Endothelial cell of umbilical vein (primary cell): ENCODE measurements at regions of chr7 and their contacts with region 1.

Region 1: DNA sequence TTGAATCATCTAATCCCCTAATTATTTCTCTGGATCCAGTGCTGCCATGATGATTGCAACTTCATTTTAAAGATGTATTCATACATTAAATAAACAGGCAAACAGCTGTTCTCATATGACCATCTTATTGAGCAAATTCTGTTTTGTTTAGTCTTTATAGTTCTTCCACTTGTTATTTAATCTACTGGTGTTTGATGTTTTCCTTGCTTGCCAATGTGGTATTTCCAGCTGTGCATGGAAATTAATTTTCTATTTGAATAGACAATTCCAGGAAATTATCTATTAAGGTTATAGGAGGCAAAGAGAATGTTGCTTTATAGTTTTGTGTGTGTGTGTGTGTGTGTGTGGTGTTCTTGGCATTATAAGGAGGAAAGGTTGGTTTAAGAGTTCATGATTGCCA is 167.0 kb upstream of the PRPS1L1 start:
- DNase-seq: peak; percentile 58
- H3K4me3 ChIP-seq: no peak overlapping the region
- H3K27ac ChIP-seq: no peak overlapping the region
- H3K4me1 ChIP-seq: peaks cover 6% of the 10 kb centered on the region
- H3K27me3 ChIP-seq: no peaks in the 10 kb centered on the region
- CTCF ChIP-seq: no peak
- POLR2A ChIP-seq: no peak

Region 2: DNA sequence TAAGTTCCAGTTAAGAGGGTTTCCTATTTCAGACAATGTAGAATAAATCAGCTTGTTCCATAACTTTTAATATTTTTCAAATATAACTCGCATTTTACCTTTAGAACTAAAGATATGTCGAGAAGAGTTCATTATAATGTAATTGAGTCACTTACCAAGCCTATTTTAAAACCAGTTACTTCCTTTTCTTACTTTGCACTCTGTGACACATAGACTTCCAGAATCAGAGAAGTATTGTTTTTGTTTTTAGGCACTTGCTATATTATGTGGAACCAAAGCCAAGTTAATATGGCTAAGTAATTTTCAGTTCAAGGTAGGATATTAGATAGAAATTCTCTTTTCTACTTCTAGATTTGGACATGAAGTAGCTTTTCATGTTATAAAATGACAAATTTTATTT is 15.8 kb after region 1 on chr7:
- CTCF ChIA-PET with region 1: interaction called, 3 read pairs
- POLR2A ChIA-PET with region 1: interaction called, 3 read pairs
- dilution Hi-C with region 1: no loop called
- intact Hi-C with region 1: loop called (anchors 2 kb)
- DNase-seq: no peak
- H3K4me3 ChIP-seq: no peak overlapping the region
- H3K27ac ChIP-seq: no peak overlapping the region
- H3K4me1 ChIP-seq: peaks cover 4% of the 10 kb centered on the region
- H3K27me3 ChIP-seq: no peaks in the 10 kb centered on the region
- CTCF ChIP-seq: no peak
- POLR2A ChIP-seq: no peak

Region 3: GRCh38 chr7:18370633-18371032 is 176.0 kb after region 1 on chr7:
- CTCF ChIA-PET with region 1: no interaction called
- POLR2A ChIA-PET with region 1: no interaction called
- dilution Hi-C with region 1: no loop called
- intact Hi-C with region 1: no loop called
- DNase-seq: no peak
- H3K4me3 ChIP-seq: no peak overlapping the region
- H3K27ac ChIP-seq: no peak overlapping the region
- H3K4me1 ChIP-seq: no peaks in the 10 kb centered on the region
- H3K27me3 ChIP-seq: no peaks in the 10 kb centered on the region
- CTCF ChIP-seq: no peak
- POLR2A ChIP-seq: no peak